ENCODE measurements at regions of chr20 and their contacts with region 1.

Region 1: GRCh38 chr20:45293041-45294002 is 13.3 kb upstream of the RBPJL start:
- DNase-seq: peak; percentile 84 to 89
- ATAC-seq: peak; percentile 81 to 91 (median 90)
- H3K4me3 ChIP-seq: peak overlapping the region; percentile 62
- H3K27ac ChIP-seq: no peak overlapping the region
- H3K4me1 ChIP-seq: peaks cover 8% of the 10 kb centered on the region
- H3K27me3 ChIP-seq: peaks cover 0 to 29% (median 11%) of the 10 kb centered on the region in 3 donors
- CTCF ChIP-seq: peak; percentile 93

Region 2: DNA sequence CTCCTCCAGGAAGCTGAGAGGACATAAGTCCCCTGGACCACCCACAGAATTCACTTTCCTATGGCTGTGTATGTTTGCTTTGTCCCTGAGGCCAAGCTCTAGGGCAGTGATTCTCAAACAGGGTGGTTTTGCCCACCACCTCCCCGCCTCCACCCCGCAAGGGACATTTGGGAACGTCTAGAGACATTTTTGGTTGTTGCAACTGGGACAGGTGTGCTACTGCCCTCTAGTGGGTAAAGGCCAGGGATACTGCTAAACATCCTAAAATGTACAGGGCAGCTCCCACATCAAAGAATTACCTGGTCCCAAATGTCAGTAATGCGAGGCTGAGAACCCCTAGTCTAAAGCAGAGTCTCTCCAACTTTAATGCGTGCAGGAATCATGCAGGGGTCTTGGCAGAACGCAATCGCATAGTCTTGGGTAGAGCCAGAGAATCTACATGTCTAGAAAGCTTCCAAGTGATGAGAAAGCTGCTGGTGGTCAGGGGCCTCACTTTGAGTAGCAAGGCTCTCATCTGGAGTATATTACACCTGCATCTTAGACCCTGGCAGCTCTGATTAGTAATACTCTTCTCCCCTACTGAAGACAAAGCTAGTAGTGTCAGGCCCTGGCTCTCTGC is 197.5 kb before region 1 on chr20:
- intact Hi-C with region 1: loop called in 1 of 2 experiments (anchors 5 kb)
- DNase-seq: no peak
- ATAC-seq: peak in 2 of 4 donors; percentile 64 to 82
- H3K4me3 ChIP-seq: no peak overlapping the region
- H3K27ac ChIP-seq: no peak overlapping the region
- H3K4me1 ChIP-seq: no peaks in the 10 kb centered on the region
- H3K27me3 ChIP-seq: peaks cover 0 to 50% (median 23%) of the 10 kb centered on the region in 3 donors
- CTCF ChIP-seq: peak; percentile 54

Region 3: DNA sequence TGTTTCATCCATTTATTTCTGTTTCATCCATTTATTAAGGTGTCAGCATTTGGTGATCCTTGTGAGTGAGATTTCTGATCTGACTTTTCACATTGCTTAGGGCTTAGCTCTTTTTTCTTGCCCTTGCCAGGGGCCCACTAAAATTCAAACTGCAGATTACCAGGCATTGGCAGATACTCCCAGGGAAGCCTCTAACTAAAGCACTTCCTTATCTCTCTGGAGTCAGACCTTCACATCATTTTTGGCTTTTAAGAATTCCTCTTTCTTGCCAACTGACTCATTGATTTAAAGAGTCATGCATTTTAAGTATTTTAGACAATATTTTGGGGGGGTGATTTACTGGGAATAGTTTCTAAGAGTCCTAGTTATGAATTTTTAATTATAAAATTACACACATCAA is 288.4 kb after region 1 on chr20:
- intact Hi-C with region 1: no loop called
- DNase-seq: no peak
- ATAC-seq: no peak
- H3K4me3 ChIP-seq: no peak overlapping the region
- H3K27ac ChIP-seq: no peak overlapping the region
- H3K4me1 ChIP-seq: no peaks in the 10 kb centered on the region
- H3K27me3 ChIP-seq: no peaks in the 10 kb centered on the region
- CTCF ChIP-seq: no peak

Measured in psoas muscle (tissue), 8 donors.